Posterior vena cava (tissue), 2 donors: ENCODE measurements at regions of chr2 and their contacts with region 1.

Region 1: DNA sequence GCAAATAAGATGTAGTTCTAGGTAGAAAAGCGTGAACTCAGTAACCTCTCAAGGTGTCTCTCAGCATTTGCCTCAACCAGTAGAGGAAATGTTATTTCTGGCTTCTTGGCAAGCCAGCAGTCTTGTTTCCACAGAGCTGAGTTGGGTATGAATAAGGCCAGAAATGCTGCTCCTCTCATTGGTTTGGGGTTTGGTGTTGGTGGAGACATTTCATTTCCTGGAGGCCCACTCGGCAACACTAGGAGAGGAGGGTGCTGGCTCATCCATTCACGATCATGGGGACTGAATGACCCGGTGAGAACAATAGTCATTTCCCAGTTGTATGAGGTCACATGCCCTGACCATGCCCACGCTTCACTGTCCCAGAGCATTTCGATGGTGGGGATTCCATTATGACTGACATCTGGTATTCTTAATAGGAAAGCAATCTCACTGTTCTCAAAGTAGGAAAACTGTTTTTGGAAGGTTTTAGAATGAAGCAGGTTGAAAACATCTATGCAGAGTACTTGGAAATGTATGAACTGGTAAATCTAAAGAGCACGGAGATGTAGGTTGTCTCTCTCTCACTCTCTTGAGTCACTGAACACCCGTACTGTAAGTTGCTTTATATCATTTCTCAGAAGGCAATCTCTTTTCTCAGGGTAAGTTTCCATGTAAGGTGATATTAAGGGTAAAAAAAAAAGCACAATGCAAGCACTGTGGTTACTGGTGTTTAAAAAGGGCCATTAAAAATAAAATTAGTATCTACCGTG is 37.1 kb upstream of the CTLA4 start:
- DNase-seq: no peak

Region 2: GRCh38 chr2:203591642-203592041 is 238.8 kb before region 1 on chr2:
- intact Hi-C with region 1: no loop called
- DNase-seq: no peak

Region 3: DNA sequence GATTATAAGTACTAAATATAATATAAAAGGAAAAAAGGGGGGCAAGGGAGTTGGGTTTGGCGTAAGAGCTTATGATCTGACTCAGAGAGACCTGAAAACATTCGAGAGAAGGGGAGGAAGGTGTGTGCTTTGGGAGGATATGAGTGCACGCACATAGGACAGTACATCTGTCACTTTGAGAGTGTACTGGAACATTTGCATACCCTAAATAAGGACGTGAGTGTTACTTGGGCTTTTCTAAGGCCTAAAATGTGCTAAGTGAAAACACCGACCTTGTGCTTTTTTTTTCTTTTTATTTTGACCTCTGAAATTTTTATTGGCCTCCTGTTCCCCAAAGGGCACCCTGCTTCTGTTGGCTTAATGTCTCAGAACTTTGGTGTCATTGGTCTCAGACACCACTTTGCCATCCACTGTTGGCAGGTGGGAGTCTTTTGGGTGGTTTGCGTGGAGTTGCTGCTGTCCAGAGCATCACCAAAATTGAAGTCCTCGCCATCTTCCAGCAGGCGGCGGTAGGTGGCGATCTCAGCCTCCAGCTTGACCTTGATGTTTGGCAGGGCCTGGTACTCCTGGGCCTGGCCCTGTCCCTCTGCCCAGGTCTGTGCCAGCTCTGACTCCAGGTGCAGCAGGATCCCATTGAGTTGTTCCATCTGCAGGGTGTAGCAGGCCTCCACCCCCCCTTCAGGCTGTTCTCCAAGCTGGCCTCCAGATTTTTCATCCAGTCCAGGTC is 66.4 kb before region 1 on chr2:
- intact Hi-C with region 1: no loop called
- DNase-seq: no peak

Region 4: DNA sequence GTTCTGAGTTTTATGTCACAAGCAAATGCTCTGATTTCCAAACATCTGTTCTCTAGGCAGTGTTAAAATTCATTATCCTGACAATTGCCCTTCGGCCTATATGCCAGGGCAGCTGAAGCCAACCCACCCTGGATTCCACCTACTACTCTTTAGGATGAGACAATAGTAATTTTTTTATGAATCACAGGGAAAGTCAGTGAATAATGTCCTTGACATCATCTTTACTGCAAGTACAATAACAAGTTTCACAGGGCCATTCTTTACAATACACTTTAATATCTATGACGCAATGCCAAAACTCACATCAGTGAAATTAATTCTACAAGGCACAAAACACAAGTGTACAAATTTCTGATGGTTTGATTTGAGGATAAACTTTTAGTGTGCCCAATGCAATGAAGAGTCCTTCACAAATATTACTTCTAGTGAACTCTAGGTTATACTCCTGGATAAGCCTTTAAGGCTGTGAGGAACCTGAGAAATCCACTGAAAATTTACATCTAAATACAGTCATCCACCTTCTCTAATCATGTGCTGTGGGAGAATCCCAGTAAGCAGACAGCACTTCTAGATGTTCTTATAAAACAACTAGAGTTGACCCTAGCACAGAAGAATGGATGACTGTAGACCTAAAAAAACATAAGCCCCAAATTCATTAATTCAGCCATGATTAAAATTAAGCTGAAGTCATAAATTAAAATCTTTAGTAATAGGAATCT is 40.2 kb before region 1 on chr2:
- intact Hi-C with region 1: no loop called
- DNase-seq: no peak

Region 5: DNA sequence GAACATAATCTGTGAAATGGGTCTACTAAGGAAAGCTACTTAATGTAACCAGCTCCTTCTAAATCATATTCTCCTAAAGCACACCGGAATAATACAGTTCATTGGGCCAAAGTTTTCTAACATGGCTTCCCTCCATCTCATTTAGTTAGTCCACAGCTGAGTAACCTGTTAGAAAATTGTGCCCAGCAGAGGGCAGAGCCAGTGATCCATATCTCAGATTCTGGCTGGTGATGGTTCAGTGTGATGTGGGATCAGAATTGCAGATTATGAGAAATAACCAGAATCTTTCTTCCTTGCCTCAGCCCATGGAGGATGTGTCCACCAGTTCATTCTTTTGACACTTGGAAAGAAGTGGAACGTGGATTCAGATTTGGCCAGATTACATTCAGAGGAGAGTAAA is 27.7 kb after region 1 on chr2:
- intact Hi-C with region 1: loop called in 1 of 2 experiments (anchors 1 kb)
- DNase-seq: no peak